AG04450 (cell line): ENCODE measurements at regions of chr17 and their contacts with region 1.

Region 1: DNA sequence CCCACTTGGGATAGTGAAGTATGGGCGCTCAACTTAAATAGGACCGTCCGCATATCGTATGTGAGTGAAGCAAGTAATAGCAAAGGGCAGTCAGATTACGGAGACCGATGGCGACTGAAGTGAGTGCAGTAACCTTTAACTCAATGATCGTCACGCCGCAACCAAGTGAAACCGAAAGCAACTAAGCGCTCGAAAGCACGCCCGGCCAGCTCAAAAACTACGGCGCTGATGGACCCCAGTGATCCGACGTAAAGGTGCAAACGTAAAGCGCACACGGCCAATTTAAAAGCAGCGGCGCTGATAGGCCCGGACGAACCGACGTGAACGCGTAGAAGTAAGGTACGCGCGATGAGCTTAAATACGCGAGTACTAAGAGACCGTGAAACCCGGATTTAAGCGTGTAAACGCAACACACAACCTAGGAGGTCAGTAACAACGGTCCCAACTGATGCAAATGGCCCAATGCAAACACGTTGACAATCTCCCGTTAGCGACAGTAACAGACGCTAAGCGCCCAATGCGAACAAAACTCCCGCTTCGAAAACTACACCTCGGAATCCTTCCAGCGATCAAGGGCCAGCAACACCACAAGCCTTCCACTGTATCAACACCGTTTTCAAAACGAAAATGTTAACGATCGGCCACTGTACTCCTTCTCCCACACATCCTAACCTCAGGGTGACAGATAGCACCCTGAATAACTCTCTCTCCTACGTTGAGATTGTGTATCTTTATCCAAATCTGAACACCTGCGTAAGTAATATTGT is 37.9 kb upstream of the ARL4D start:
- DNase-seq: peak; percentile 98
- H3K4me3 ChIP-seq: peak overlapping the region; percentile 58
- H3K27ac ChIP-seq: peak overlapping the region; percentile 87
- H3K27me3 ChIP-seq: no peaks in the 10 kb centered on the region
- CTCF ChIP-seq: no peak

Region 2: GRCh38 chr17:42027961-42028790 is 1332.7 kb before region 1 on chr17:
- CTCF ChIA-PET with region 1: no interaction called
- POLR2A ChIA-PET with region 1: no interaction called
- DNase-seq: no peak
- H3K4me3 ChIP-seq: no peak overlapping the region
- H3K27ac ChIP-seq: no peak overlapping the region
- H3K27me3 ChIP-seq: peaks cover 16% of the 10 kb centered on the region
- CTCF ChIP-seq: peak; percentile 25; the same call in 1 of the 2 replicates

Region 3: GRCh38 chr17:43338886-43339516 is 21.9 kb before region 1 on chr17:
- CTCF ChIA-PET with region 1: interaction called, 12 read pairs
- POLR2A ChIA-PET with region 1: interaction called, 4 read pairs
- DNase-seq: no peak
- H3K4me3 ChIP-seq: no peak overlapping the region
- H3K27ac ChIP-seq: no peak overlapping the region
- H3K27me3 ChIP-seq: no peaks in the 10 kb centered on the region
- CTCF ChIP-seq: peak; percentile 77

Region 4: DNA sequence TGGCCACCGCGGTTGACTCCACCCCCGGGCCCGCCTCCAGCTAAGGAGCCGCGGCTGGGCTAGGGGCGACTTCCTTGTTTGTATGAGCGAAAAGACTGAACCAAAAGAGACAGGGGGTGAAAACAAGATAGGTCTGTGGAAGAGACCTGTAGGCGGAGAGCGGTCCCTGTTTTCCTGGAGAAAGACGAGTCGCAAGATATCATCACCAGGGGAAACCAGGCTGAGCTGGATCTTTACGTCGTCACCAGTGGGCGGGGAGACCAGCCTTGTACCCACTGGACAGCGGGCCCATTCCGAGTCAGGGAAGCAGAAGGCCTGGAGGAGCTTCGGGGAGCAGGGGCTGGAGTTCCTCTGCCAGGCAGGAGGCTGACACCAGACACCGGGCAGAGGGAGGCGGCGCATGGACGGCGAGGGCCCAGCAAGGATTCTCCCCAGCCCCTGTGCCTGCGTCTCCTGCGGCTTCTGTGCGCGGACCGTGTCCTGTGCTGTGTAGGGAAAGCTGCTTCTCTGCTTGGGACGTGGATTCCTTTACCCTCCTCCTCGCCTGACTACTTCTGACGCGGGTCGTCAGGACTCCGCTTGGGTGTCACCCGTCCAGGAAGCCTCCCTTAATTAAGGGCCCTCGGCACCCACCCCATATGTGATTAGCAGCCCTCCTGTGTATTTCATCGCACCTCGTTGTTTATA is 27.6 kb after region 1 on chr17:
- CTCF ChIA-PET with region 1: no interaction called
- POLR2A ChIA-PET with region 1: interaction called, 39 read pairs
- DNase-seq: peak; percentile 79
- H3K4me3 ChIP-seq: peak overlapping the region; percentile 69
- H3K27ac ChIP-seq: peak overlapping the region; percentile 96
- H3K27me3 ChIP-seq: no peaks in the 10 kb centered on the region
- CTCF ChIP-seq: no peak